Posterior vena cava (tissue), 2 donors: ENCODE measurements at regions of chr1 and their contacts with region 1.

Region 1: DNA sequence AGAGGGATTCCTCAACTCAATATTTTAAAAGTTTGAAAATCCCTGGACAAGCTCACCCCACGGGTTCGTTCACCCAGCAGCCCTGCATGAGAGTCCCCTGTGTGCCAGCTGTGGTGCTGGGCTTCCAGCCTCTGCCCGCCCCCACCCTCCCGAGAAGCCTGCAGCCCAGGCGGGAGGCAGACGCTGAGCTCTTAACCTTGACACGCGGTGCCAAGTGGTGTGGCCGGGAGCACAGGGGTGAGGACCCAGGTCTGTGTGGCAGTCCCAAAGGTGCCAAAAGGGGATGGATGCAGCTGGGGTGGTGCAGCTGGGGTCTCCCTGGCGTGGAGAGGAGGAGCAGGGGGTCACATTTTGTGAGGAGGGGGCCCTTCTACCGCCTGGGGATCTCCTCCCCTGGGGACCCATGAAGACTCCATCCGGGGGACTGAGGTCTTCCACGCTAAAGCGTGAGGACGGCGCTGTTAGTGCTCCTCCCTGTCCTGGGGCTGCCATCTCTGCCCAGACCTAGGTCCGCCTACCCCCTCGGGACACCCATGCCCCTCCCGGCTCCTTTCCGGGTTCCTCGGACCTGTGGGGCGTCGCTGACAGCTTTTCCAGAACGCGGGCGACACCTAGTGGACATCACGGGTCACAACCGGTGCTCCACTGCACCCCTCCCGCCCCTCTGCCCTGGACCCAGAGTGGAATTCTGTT is 12.9 kb downstream of the PLA2G2F start:
- DNase-seq: peak; percentile 96

Region 2: GRCh38 chr1:19918057-19918456 is 234.0 kb before region 1 on chr1:
- intact Hi-C with region 1: loop called (anchors 2 to 5 kb)
- DNase-seq: peak; percentile 93

Region 3: GRCh38 chr1:19974822-19975416 is 177.1 kb before region 1 on chr1:
- intact Hi-C with region 1: loop called in 1 of 2 experiments (anchors 5 kb)
- DNase-seq: no peak

Region 4: GRCh38 chr1:20110679-20111078 is 41.4 kb before region 1 on chr1:
- intact Hi-C with region 1: no loop called
- DNase-seq: peak; percentile 74